Pancreas (tissue), 10 donors: ENCODE measurements at regions of chr3 and their contacts with region 1.

Region 1: GRCh38 chr3:82133070-82133606 is 371.7 kb upstream of the GBE1 start:
- DNase-seq: peak; percentile 27 to 68 (median 41)
- ATAC-seq: peak; percentile 87 to 98 (median 96)
- H3K4me3 ChIP-seq: no peak overlapping the region
- H3K27ac ChIP-seq: no peak overlapping the region
- H3K4me1 ChIP-seq: no peaks in the 10 kb centered on the region
- H3K27me3 ChIP-seq: no peaks in the 10 kb centered on the region
- CTCF ChIP-seq: peak; percentile 45 to 80 (median 70)

Region 2: GRCh38 chr3:81666493-81667121 is 466.5 kb before region 1 on chr3:
- intact Hi-C with region 1: loop called in 1 of 3 experiments (anchors 10 kb)
- DNase-seq: no peak
- ATAC-seq: peak in 3 of 4 donors; percentile 60 to 66 (median 61)
- H3K4me3 ChIP-seq: no peak overlapping the region
- H3K27ac ChIP-seq: no peak overlapping the region
- H3K4me1 ChIP-seq: peaks cover 0 to 6% (median 3%) of the 10 kb centered on the region in 3 donors
- H3K27me3 ChIP-seq: no peaks in the 10 kb centered on the region
- CTCF ChIP-seq: peak in 3 of 4 donors; percentile 34 to 52 (median 40)

Region 3: GRCh38 chr3:82194870-82195269 is 61.7 kb after region 1 on chr3:
- intact Hi-C with region 1: no loop called
- DNase-seq: no peak
- ATAC-seq: no peak
- H3K4me3 ChIP-seq: no peak overlapping the region
- H3K27ac ChIP-seq: no peak overlapping the region
- H3K4me1 ChIP-seq: no peaks in the 10 kb centered on the region
- H3K27me3 ChIP-seq: no peaks in the 10 kb centered on the region
- CTCF ChIP-seq: no peak